Activated CD8-positive, alpha-beta memory T cell treated with anti-CD3 and anti-CD28 coated beads, Interleukin-2, amount 10 ng/mL, durations not matched to agents 7 days and 5 days (primary cell): ENCODE measurements at regions of chr21 and their contacts with region 1.

Region 1: DNA sequence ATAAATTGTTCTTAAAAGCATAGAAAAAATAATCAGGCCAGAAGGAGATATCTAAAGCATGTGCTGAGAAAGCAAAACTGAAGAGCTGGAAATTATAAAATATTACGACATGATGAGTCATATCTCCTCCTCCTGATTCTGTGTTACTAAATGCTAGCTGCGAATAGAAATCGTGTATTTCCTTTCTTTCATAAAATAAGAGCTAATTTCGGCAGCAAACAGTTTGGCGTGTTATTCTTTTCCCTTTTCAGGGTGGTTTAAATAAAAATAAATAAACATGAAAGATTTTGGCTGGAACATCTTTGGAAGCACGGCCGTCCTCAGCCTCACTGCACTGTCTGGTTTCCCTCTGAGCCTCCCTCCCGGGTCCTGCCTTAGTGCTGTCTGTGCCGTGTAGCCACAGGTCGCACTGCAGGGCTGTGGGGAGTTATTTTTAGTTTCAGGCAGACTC is 56.0 kb downstream of the ADARB1 start:
- DNase-seq: no peak
- ATAC-seq: peak; percentile 57
- H3K4me3 Mint-ChIP-seq: no peak overlapping the region
- H3K27ac Mint-ChIP-seq: no peak overlapping the region
- H3K4me1 Mint-ChIP-seq: peaks cover 20% of the 10 kb centered on the region
- H3K27me3 Mint-ChIP-seq: no peaks in the 10 kb centered on the region

Region 2: GRCh38 chr21:44801468-44802395 is 328.6 kb before region 1 on chr21 and contains the start of gene UBE2G2:
- CTCF ChIA-PET with region 1: interaction called, 10 read pairs
- DNase-seq: peak; percentile 86
- ATAC-seq: peak; percentile 96
- H3K4me3 Mint-ChIP-seq: peak within 1 kb of the TSS; percentile 99
- H3K27ac Mint-ChIP-seq: peak within 1 kb of the TSS; percentile 92
- H3K4me1 Mint-ChIP-seq: peaks cover 49% of the 10 kb centered on the region
- H3K27me3 Mint-ChIP-seq: no peaks in the 10 kb centered on the region
- total RNA-seq, gene UBE2G2: 103 to 121 TPM

Region 3: DNA sequence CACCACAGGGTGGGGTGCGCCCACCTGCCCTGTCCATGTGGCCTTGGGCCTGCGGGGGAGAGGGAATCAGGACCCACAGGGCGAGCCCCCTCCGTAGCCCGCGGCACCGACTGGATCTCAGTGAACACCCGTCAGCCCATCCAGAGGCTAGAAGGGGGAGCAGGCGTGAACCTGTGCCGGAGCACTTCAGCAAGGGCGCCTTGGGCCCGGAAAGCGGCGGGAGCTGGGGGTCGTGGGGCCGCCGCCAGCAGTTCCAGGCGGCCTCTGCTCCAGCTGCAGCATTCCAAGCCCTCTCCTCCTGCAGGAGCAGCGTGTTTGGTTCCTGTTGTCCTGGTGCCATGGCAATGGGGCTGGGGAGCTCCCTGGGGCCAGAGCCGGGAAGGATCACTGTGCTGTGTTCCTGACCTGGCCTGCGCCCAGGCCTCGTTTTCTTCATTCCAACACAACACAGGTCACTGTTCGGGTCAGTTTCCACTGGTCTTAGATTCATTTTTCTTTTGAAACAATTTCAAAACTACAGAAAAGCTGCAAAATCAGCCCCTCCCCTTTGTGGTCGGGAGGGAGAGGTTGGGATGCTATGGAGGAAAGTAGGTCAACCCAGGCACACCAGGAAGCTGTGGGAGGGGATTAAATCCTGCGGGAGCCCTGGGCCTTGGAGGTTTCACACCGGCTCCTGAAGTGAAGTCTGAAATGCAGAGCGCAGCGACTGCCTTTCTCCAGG is 171.7 kb before region 1 on chr21:
- CTCF ChIA-PET with region 1: interaction called, 275 read pairs
- DNase-seq: no peak
- ATAC-seq: no peak
- H3K4me3 Mint-ChIP-seq: no peak overlapping the region
- H3K27ac Mint-ChIP-seq: no peak overlapping the region
- H3K4me1 Mint-ChIP-seq: no peaks in the 10 kb centered on the region
- H3K27me3 Mint-ChIP-seq: no peaks in the 10 kb centered on the region

Region 4: DNA sequence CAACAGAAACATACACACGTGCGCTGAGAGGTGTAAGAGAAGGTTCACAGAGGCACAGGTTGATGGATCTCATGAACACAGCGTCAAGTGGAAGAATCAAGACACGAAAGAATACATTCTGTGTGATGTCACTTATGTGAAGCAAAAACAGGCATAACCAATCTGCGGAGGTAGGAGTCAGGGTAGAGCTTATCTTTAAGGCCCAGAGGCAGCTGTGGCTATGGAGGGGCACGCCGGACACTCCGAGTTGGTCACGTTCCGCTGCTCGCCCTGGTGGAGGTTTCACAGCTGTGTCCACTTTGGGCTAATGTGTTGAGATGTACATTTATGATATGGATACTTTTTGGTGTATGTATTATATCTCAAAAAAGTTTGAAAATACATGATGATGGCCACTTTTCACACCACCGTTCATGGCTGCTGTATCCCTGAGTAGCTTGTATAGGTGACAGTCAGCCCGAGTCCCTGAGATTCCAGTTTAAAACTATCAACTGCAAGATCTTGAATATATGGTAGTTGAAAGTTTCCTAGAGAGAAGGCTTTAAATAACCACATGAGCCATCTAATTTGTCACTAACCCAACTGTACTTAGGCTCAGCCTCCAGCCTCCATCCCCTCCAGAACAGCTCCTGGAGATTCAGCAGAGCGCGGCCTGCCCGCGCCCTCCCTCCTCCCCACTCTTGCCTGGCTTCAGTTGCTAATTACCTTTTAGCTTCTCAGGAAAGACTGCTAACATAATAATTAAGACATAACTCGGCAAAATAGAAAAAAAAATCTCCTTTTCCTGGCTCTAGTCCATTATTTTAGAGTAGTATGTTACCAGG is 62.7 kb before region 1 on chr21:
- CTCF ChIA-PET with region 1: interaction called, 13 read pairs
- DNase-seq: peak; percentile 34
- ATAC-seq: no peak
- H3K4me3 Mint-ChIP-seq: no peak overlapping the region
- H3K27ac Mint-ChIP-seq: no peak overlapping the region
- H3K4me1 Mint-ChIP-seq: no peaks in the 10 kb centered on the region
- H3K27me3 Mint-ChIP-seq: peaks cover 12% of the 10 kb centered on the region

Region 5: DNA sequence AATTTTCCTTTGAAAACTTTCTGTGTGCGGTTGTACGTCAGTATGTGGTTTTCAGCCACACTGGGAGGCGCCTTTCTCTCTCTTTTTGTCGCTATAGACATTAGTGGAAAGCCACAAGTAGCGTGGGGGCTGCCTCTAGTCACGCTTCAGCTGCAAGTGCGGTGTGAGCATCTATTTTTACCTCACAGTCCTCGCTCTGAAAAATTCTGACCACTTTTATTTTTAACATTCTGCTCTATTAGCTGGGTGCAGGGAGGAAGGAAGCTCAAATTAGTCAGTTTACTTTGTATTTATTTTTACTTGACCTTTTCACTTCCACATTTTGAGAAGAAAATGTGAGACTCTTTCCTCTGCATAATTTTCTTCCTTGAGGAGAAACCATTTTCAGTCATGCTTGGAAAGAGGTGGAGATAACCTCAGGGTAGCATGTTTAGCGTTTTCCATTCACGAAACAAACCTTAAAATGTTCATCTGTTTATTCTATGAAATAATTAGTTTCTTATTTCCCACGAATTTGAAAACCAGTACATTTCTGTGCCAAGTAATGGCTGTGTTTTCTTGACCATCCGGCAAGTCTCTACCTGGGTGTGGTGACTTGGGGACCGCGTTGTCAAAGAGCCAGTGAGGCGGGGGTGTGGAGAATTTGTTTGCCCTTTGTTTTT is 20.4 kb before region 1 on chr21:
- CTCF ChIA-PET with region 1: interaction called, 19 read pairs
- DNase-seq: peak; percentile 74
- ATAC-seq: peak; percentile 80
- H3K4me3 Mint-ChIP-seq: peak overlapping the region; percentile 62
- H3K27ac Mint-ChIP-seq: peak overlapping the region; percentile 58
- H3K4me1 Mint-ChIP-seq: peaks cover 48% of the 10 kb centered on the region
- H3K27me3 Mint-ChIP-seq: no peaks in the 10 kb centered on the region